Activated CD4-positive, alpha-beta T cell treated with anti-CD3 and anti-CD28 coated beads, Interleukin-2, amount 10 ng/mL, durations not matched to agents 7 days and 5 days (primary cell): ENCODE measurements at regions of chr11 and their contacts with region 1.

Region 1: GRCh38 chr11:118928108-118928870 is 2.6 kb upstream of the BCL9L start:
- DNase-seq: peak; percentile 94
- H3K4me3 Mint-ChIP-seq: peak overlapping the region; percentile 93
- H3K27ac Mint-ChIP-seq: peak overlapping the region; percentile 98
- H3K4me1 Mint-ChIP-seq: peaks cover 51% of the 10 kb centered on the region
- H3K27me3 Mint-ChIP-seq: peaks cover 2% of the 10 kb centered on the region

Region 2: DNA sequence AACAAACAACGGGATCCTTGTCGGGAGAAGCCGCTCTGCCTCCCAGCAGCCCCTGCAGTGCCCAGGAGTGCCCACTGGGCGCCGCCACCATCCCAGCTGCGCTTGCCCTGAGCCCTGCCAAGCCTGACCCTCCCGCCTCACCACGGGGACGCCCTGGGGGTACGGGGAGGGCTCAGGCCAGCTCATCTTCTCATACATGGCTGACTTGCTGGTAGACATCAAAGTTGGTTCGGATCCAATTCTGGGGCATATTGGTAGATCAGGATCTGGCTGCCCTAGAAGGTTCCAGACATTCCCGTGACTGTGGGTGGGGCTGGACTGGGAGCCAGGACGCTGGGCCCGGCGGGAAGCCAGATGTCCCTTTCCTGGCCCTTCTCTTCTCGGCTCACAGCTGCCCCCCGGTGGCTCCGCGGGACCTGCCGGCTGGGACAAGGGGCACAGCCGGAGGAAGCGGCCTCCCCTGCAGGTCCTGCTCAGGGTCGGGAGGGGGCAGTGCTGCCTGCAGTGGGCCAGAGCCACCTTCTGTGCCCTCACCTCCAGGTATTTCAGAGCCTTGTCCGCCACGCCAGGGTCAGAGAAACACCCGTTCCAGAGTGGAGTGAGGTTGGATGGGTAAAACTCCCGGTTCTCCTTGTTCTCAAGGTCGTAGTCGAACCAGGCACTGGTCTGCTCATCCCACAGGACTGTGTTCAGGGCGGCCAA is 238.3 kb before region 1 on chr11:
- CTCF ChIA-PET with region 1: interaction called, 13 read pairs
- POLR2A ChIA-PET with region 1: interaction called, 3 read pairs
- DNase-seq: peak; percentile 86
- H3K4me3 Mint-ChIP-seq: peak overlapping the region; percentile 52
- H3K27ac Mint-ChIP-seq: peak overlapping the region; percentile 77
- H3K4me1 Mint-ChIP-seq: peaks cover 50% of the 10 kb centered on the region
- H3K27me3 Mint-ChIP-seq: peaks cover 5% of the 10 kb centered on the region

Region 3: DNA sequence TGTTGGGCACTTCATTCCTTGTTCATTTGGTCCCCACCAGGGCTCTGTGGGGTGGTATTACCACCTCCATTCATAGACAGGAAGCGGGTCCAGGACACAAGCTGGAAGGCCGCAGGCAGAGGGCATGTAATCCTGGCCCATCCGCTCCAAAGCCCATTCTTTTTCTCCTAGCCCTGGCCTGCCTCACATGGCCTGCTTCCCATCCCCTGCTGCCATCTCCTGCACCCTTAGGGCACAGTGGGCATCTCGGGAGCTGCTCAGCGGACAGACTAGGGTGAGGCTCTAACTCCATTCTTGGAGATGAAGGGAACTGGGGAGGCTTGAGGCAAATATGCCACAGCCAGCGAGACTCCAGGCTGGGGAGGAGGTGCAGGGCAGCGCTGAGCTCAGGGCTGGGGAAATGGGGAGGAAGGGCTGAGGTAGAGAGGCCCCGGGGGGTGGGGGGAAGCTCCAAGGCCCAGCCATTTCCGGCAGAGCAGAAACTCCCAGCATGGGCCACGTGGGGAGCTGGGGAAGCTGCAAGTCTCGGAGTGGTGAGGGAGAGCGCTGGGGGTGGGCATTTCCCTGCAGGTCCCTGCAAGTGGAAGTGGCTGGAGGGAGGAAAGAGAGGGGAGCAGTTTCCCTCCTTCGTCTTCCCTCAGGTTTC is 11.8 kb after region 1 on chr11:
- CTCF ChIA-PET with region 1: interaction called, 53 read pairs
- POLR2A ChIA-PET with region 1: interaction called, 4 read pairs
- DNase-seq: peak; percentile 69
- H3K4me3 Mint-ChIP-seq: peak overlapping the region; percentile 30
- H3K27ac Mint-ChIP-seq: peak overlapping the region; percentile 84
- H3K4me1 Mint-ChIP-seq: peaks cover 43% of the 10 kb centered on the region
- H3K27me3 Mint-ChIP-seq: no peaks in the 10 kb centered on the region

Region 4: DNA sequence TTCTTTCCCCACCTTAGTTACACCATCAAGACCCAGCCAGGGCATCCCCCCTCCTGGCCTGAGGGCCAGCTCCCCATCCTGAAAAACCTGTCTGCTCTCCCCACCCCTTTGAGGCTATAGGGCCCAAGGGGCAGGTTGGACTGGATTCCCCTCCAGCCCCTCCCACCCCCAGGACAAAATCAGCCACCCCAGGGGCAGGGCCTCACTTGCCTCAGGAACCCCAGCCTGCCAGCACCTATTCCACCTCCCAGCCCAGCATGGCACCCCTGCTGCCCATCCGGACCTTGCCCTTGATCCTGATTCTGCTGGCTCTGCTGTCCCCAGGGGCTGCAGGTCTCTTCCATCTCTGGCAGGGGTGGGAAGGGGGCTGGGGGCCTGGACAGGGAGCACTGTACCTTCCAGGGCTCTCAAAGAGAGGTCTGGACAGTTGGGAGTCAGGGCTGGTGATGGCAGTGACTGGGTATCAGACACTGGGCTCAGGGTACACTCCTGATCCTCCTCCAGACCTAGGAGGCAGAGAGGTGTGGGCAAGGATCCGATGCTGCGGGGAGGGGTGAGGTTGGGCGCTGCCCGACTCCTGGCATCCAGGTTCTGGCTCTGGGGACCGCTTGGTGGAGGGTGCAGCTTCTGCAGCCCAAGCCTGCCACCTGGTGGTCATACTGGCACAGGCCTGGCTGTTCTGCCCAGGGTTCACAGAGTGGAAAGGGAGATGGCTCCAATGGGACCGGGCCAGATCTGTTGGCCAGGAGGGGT is 28.0 kb after region 1 on chr11 and contains the start of gene UPK2:
- CTCF ChIA-PET with region 1: interaction called, 12 read pairs
- POLR2A ChIA-PET with region 1: no interaction called
- DNase-seq: peak; percentile 91
- H3K4me3 Mint-ChIP-seq: no peak within 1 kb of the TSS
- H3K27ac Mint-ChIP-seq: peak within 1 kb of the TSS; percentile 61
- H3K4me1 Mint-ChIP-seq: peaks cover 4% of the 10 kb centered on the region
- H3K27me3 Mint-ChIP-seq: peaks cover 8% of the 10 kb centered on the region
- total RNA-seq, gene UPK2: 0.60 TPM in 1 of 2 experiments, not detected in the other

Region 5: GRCh38 chr11:119015054-119015611 is 86.8 kb after region 1 on chr11:
- CTCF ChIA-PET with region 1: interaction called, 12 read pairs
- POLR2A ChIA-PET with region 1: no interaction called
- DNase-seq: no peak
- H3K4me3 Mint-ChIP-seq: no peak overlapping the region
- H3K27ac Mint-ChIP-seq: no peak overlapping the region
- H3K4me1 Mint-ChIP-seq: peaks cover 45% of the 10 kb centered on the region
- H3K27me3 Mint-ChIP-seq: no peaks in the 10 kb centered on the region